Dorsolateral prefrontal cortex (tissue), 120 donors: ENCODE measurements at regions of chr1 and their contacts with region 1.

Region 1: GRCh38 chr1:44609412-44609767 is 64.9 kb downstream of the TMEM53 start:
- DNase-seq: peak in 6 of 10 donors; percentile 29 to 67 (median 45)
- H3K4me3 ChIP-seq: no peak overlapping the region
- H3K27ac ChIP-seq: peak overlapping the region in 28 of 59 donors; percentile 1 to 79 (median 36)
- H3K27me3 ChIP-seq: peaks cover 0 to 6% (median 0%) of the 10 kb centered on the region in 45 donors
- CTCF ChIP-seq: peak in 52 of 56 donors; percentile 18 to 66 (median 47)

Region 2: DNA sequence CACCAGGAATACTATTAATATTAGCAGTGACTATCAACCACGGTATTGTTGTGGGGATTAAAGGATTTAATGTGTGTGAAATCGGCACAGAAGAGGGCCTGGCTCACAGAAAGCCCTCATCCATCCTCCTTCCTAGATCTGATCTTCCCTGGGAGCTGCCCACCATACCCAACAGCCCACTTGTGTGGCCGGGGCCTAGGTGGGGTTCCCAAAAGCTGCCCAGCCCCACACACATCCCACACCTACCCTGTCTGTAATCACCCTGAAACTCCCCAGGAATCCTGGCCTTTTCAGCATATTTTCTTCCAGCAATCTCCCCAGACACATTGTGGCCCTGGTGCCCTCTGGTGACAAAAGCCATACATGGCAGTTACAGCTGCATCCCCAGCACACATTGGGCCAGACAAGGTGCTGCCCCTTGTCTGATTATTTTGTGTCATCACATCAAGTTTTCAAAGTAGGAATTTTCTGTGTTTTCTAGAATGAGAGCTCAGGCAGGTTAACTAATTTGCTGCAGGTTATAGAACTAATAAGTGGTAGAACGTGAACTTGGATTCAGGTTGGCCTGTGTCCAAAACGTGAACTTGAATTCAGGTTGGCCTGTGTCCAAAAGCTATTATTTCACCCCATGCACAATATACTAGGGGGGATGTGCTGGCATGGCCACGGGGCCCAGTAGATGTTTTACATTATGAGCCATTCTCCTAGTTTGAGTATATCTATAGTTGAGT is 572.8 kb before region 1 on chr1:
- intact Hi-C with region 1: no loop called
- DNase-seq: peak in 9 of 10 donors; percentile 60 to 85 (median 77)
- H3K4me3 ChIP-seq: no peak overlapping the region
- H3K27ac ChIP-seq: peak overlapping the region in 58 of 59 donors; percentile 33 to 97 (median 78)
- H3K27me3 ChIP-seq: no peaks in the 10 kb centered on the region
- CTCF ChIP-seq: peak; percentile 38 to 97 (median 89)

Region 3: DNA sequence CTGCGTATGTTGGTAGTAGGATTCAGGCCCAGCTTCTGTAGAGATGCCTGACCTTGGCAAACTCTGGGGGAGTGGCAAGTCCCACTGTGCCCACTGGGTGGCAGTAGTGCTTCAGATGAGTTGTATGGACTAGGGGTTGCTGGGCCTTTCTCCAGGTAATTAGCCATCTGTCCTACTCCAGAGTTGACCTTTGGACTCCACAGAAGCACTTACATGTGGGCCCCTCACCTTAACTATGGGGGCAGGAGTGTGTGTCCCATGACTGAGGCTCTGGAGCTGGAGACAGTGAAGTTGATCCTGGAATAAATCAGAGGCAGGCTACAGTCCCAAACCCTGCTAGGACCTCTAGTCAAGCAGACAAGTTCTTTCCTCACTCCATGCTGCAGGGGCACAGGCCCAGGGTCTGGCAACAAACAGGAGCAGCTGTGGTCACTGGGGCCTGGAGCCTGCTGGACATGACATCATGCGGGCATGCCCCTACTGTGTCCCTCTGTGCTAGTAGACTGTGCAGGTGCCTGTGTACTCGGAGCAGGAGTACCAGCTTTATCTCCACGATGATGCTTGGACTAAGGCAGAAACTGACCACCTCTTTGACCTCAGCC is 391.5 kb before region 1 on chr1:
- intact Hi-C with region 1: no loop called
- DNase-seq: peak; percentile 70 to 91 (median 80)
- H3K4me3 ChIP-seq: no peak overlapping the region
- H3K27ac ChIP-seq: peak overlapping the region in 49 of 59 donors; percentile 3 to 77 (median 56)
- H3K27me3 ChIP-seq: no peaks in the 10 kb centered on the region
- CTCF ChIP-seq: peak; percentile 70 to 96 (median 91)

Region 4: DNA sequence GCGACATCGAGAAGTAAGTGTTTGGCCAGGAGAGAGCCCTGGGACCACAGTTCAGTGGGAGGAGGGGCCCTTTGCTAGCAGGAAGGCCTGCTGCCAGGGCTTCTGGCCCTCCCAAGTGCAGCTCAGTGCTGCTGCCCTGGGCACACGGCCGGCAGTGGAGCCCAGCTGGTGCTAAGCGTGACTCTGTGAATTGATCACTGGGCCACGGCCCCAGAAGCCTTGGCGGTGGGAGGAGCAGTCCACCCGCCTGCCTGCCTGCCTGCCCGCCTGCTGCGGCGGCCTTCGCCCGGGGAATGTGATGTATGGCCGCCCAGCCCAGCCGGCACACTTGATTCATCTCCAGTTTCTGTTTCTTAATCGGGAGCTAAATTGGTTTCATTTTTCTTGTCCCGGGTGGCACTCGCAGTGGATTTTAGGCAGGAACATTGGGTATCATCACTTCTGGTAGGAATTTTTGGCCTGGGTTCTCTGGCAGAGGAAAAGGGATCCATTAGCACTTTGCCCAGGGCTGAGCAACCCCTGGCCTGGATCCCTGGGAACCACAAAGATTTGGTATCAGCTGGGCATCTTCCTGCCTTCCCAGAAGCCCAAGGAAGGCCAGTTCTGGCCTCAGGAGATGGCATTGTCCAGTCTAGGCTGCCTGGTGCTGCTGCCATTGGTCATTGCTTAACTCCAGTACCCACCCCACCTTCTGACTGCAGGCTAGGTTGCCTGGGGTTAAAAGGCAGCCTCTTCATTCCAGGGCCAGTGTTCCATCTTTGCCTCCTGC is 36.3 kb after region 1 on chr1:
- intact Hi-C with region 1: loop called (anchors 2 to 5 kb)
- DNase-seq: peak; percentile 49 to 93 (median 91)
- H3K4me3 ChIP-seq: peak overlapping the region in 10 of 59 donors; percentile 2 to 32 (median 12)
- H3K27ac ChIP-seq: peak overlapping the region; percentile 62 to 94 (median 88)
- H3K27me3 ChIP-seq: no peaks in the 10 kb centered on the region
- CTCF ChIP-seq: peak in 40 of 56 donors; percentile 9 to 61 (median 36)